Activated CD4-positive, alpha-beta memory T cell treated with anti-CD3 and anti-CD28 coated beads, Interleukin-2, amount 10 ng/mL, durations not matched to agents 7 days and 5 days (primary cell): ENCODE measurements at regions of chr17 and their contacts with region 1.

Region 1: DNA sequence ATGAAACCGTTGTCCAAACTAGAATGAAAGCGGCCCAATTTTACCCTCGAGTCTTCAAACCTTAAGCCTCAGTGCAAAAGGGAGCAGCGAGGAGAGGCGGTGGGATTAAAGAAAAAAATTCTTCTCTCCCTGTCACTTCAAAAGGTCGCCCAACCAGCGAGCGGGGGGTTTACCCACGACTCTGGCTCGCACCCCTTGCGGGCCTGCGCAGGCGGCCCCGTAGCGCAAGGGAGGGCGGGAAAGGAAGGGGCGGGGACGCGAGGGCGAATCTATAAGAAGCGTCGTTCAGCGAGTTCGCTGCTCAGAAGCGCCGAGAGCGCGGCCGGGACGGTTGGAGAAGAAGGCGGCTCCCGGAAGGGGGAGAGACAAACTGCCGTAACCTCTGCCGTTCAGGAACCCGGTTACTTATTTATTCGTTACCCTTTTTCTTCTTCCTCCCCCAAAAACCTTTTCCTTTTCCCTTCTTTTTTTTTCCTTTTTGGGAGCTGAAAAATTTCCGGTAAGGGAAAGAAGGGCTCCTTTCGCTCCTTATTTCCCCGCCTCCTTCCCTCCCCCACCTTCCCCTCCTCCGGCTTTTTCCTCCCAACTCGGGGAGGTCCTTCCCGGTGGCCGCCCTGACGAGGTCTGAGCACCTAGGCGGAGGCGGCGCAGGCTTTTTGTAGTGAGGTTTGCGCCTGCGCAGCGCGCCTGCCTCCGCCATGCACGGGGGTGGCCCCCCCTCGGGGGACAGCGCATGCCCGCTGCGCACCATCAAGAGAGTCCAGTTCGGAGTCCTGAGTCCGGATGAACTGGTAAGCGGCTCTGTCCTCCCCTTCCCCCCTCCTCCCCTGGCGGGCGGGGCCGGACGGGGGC is at the start of gene POLR2A:
- DNase-seq: peak; percentile 97
- H3K4me3 Mint-ChIP-seq: peak within 1 kb of the TSS; percentile 87
- H3K27ac Mint-ChIP-seq: peak within 1 kb of the TSS; percentile 98
- H3K4me1 Mint-ChIP-seq: peaks cover 66% of the 10 kb centered on the region
- H3K27me3 Mint-ChIP-seq: no peaks in the 10 kb centered on the region
- total RNA-seq, gene POLR2A: 169 to 172 TPM

Region 2: DNA sequence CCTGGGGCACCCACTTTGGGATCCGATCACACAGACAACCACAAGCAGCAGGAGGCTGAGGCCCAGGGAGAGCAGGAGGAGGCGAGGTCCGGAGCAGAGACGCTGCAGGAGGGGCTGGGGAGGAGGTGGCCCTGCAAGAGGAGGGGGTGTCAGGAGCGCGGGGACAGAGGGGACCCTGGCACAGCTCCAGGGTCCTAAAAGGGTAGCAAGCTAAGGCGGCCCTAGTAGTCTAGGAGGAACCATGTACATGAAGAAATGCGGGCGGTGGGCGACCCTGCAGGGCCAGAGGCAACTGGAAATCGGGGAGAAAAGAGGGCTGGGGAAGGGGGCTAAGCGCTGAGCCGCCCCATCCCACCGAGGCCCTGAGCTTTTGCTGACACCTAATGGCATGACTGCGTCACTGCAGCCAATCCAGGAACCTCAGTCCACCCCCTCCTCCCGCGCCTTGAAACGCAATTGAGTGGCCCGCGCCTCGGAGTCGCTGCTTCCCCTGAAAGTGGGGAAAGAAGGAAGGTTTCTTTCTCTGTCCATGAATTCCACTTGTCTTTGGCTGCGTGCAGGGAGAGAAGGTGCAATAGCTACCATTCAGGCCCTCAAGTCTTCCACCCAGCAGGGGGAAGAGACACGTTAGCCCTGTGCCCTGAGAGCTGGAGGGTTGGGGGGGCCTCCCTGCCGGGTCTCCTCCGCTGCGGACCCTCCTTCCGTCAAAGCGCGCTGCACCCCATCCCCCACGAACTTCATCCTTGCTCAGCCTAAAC is 306.9 kb before region 1 on chr17:
- CTCF ChIA-PET with region 1: no interaction called
- POLR2A ChIA-PET with region 1: no interaction called
- DNase-seq: peak; percentile 67
- H3K4me3 Mint-ChIP-seq: peak overlapping the region; percentile 25
- H3K27ac Mint-ChIP-seq: no peak overlapping the region
- H3K4me1 Mint-ChIP-seq: peaks cover 12% of the 10 kb centered on the region
- H3K27me3 Mint-ChIP-seq: peaks cover 22% of the 10 kb centered on the region

Region 3: GRCh38 chr17:7336240-7337175 is 147.8 kb before region 1 on chr17 and contains the start of gene ACAP1:
- CTCF ChIA-PET with region 1: no interaction called
- POLR2A ChIA-PET with region 1: interaction called, 29 read pairs
- DNase-seq: peak; percentile 93
- H3K4me3 Mint-ChIP-seq: peak within 1 kb of the TSS; percentile 91
- H3K27ac Mint-ChIP-seq: peak within 1 kb of the TSS; percentile 91
- H3K4me1 Mint-ChIP-seq: peaks cover 59% of the 10 kb centered on the region
- H3K27me3 Mint-ChIP-seq: no peaks in the 10 kb centered on the region
- total RNA-seq, gene ACAP1: 682 to 709 TPM

Region 4: DNA sequence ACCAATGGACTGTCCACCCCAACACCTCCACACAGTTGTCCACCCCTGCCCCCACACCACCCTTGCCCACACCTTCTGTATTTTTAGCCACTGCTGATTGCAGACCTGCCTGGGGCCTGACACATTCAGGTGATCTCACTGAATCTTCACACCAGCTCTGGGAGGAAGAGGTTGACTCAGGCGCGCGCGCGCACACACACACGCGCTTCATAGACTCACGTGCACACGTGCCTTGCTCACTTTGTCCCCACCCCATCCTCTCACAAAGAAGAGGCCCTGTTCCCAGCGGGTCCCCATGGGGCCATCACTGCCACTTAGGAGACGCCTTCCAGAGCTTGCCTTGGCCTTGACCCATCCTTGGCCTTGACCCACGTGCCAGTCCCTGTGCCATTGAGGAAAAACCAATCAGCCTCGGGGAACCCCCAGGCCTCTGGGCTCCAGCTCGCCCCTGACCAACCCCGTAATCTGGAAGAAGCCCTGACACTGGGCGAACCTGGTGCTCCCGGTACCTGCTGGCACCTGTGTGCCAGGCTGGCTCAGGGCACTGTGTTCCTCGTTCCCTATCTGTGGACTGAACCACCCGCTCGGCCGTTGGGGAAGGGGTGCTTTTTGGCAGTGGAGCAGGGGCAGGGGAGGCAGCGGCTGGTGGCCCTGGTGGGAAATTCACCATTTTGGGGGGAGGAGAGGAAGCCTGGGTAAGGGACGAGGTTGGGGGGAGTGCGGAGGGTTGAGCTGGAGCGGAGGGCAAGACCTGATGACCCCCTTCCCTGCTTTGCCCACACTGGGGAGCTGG is 73.5 kb before region 1 on chr17:
- CTCF ChIA-PET with region 1: no interaction called
- POLR2A ChIA-PET with region 1: no interaction called
- DNase-seq: no peak
- H3K4me3 Mint-ChIP-seq: no peak overlapping the region
- H3K27ac Mint-ChIP-seq: no peak overlapping the region
- H3K4me1 Mint-ChIP-seq: peaks cover 10% of the 10 kb centered on the region
- H3K27me3 Mint-ChIP-seq: peaks cover 14% of the 10 kb centered on the region

Region 5: DNA sequence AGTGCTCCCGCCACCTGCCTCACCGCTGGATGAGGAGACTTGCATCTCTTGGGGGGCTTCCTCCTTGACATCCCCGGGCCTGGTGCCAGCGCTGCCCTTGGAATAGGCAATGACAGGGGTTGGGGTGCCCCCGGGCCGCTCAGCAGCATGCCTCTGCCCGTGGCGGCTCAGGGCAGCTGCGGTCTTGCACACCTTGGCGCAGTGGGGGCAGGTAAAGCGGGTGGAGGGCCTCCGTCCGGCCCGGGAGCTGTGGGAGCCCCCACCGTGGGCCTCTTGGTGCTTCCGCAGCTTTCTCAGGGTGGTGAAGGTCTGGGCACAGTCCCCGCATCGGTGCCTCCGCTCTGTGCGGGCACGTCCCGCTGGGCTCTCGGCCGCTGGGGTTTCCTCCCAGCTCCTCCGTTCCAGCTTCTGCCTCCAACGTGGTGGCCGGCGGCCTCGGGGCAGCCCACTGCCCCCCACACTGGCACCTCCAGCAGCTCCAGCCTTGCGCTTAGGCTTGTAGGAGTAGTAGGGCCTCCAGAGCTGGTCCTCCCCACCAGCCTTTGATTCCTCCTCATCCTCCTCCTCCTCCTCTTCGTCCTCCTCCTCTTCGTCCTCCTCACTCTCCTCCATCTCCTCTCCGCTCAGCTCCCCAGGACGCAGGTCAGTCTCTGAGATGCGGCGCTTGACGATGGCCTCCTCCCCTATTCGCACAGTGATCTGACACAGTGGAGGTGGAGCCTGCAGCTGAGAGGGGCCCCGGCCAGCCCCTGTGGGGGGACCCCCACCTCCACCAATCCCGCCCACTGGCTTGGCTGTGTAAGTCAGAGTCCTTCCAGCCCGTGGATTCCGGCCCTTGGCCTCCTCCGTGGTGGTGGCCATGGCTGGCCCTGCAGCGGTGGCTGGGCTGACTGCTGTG is 21.6 kb before region 1 on chr17:
- CTCF ChIA-PET with region 1: interaction called, 3 read pairs
- POLR2A ChIA-PET with region 1: interaction called, 81 read pairs
- DNase-seq: no peak
- H3K4me3 Mint-ChIP-seq: no peak overlapping the region
- H3K27ac Mint-ChIP-seq: no peak overlapping the region
- H3K4me1 Mint-ChIP-seq: peaks cover 11% of the 10 kb centered on the region
- H3K27me3 Mint-ChIP-seq: no peaks in the 10 kb centered on the region

Region 6: GRCh38 chr17:7496470-7497183 is 12.3 kb after region 1 on chr17:
- CTCF ChIA-PET with region 1: no interaction called
- POLR2A ChIA-PET with region 1: interaction called, 25 read pairs
- DNase-seq: no peak
- H3K4me3 Mint-ChIP-seq: no peak overlapping the region
- H3K27ac Mint-ChIP-seq: peak overlapping the region; percentile 54
- H3K4me1 Mint-ChIP-seq: peaks cover 23% of the 10 kb centered on the region
- H3K27me3 Mint-ChIP-seq: no peaks in the 10 kb centered on the region

Region 7: DNA sequence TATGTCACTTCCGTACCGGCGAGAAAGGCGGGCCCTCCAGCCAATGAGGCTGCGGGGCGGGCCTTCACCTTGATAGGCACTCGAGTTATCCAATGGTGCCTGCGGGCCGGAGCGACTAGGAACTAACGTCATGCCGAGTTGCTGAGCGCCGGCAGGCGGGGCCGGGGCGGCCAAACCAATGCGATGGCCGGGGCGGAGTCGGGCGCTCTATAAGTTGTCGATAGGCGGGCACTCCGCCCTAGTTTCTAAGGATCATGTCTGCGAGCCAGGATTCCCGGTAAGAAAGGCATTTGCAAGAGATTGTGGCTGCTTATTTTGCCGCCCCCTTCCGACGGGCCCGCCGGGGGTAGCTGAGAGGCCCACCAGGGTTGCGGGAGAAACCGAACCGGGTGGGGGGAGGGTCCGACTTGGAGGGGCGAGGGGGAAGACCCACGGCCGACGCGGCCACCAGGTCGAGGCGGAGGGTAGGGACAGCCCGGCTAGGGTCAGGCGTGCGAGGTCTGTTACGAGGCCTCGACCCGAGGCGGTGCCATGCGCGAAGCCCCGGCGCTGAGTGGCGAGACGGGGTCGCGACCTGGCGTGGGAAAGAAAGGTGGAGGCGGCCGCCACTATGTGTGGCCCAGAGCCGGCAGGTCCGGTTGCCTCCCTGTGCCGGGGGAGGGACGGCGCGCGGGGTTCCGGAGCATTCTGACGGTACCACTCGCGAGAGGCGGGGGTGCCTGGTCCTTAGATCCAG is 88.5 kb after region 1 on chr17:
- CTCF ChIA-PET with region 1: no interaction called
- POLR2A ChIA-PET with region 1: interaction called, 38 read pairs
- DNase-seq: peak; percentile 100
- H3K4me3 Mint-ChIP-seq: peak overlapping the region; percentile 93
- H3K27ac Mint-ChIP-seq: peak overlapping the region; percentile 99
- H3K4me1 Mint-ChIP-seq: peaks cover 63% of the 10 kb centered on the region
- H3K27me3 Mint-ChIP-seq: no peaks in the 10 kb centered on the region